ENCODE measurements at regions of chr19 and their contacts with region 1.

Region 1: GRCh38 chr19:12314553-12314952 is 18.9 kb downstream of the ZNF563 start:
- DNase-seq: no peak
- H3K27ac ChIP-seq: no peak overlapping the region
- CTCF ChIP-seq: no peak

Region 2: DNA sequence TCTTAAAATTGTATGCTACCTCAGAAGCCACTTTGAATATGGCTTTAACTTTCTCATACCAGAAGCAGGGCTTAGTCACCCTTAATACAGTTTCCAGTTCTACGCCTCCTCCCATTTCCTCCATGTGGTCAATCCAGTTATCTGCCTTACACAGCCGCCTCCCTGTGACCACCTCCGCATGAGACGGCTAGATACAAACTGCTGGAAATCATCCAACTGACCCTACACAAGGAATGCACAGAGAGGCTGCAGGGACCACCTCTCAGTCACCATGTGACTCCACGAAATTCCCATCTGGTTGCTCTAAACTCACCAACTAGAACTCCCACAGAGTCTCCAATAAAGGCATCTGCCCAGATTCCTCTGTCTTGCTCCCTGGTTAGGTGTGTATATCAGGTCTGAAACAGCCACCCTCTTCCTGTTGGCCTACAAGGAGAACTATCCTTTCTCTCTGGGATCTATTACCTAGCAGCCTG is 229.9 kb after region 1 on chr19:
- CTCF ChIA-PET with region 1: interaction called, 10 read pairs
- POLR2A ChIA-PET with region 1: no interaction called
- DNase-seq: no peak
- H3K27ac ChIP-seq: no peak overlapping the region
- CTCF ChIP-seq: no peak

Measured in RWPE1 (cell line).